OCI-LY7 (cell line): ENCODE measurements at regions of chr3 and their contacts with region 1.

Region 1: GRCh38 chr3:188993181-188993580 is 178.6 kb upstream of the TPRG1 start:
- DNase-seq: no peak
- H3K4me3 ChIP-seq: no peak overlapping the region
- H3K27ac ChIP-seq: no peak overlapping the region
- H3K4me1 ChIP-seq: no peaks in the 10 kb centered on the region
- CTCF ChIP-seq: no peak

Region 2: DNA sequence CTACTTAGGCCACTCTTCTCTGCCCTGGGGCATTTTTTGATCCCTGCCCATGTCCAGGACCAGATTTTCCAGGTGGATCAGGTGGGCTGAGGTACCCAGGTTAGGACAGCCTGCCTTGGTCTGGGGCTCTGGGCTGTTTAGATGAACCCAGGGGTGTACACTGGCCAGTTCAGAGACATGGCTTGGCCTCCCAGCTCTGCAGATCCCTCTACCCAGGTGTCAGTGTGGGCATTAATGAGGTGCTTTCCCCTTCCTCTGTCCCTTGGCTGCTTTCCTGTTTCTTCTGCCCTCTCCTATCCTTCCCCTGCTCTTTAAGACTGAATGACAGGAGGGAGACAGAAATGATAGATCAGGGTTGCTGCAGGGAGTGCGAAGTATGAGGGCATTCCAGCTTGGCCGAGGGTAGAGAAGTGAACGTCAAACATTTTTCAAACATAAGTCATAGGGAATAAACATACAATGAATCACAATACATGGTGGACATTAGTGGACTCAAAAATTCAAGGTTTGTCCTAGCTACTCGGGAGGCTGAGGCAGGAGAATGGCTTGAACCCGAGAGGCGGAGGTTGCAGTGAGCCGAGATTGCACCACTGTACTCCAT is 1765.4 kb before region 1 on chr3:
- CTCF ChIA-PET with region 1: no interaction called
- POLR2A ChIA-PET with region 1: interaction called, 11 read pairs
- intact Hi-C with region 1: no loop called
- DNase-seq: no peak
- H3K4me3 ChIP-seq: no peak overlapping the region
- H3K27ac ChIP-seq: no peak overlapping the region
- H3K4me1 ChIP-seq: no peaks in the 10 kb centered on the region
- CTCF ChIP-seq: no peak

Region 3: GRCh38 chr3:189186101-189186500 is 192.9 kb after region 1 on chr3:
- CTCF ChIA-PET with region 1: no interaction called
- POLR2A ChIA-PET with region 1: no interaction called
- intact Hi-C with region 1: no loop called
- DNase-seq: no peak
- H3K4me3 ChIP-seq: no peak overlapping the region
- H3K27ac ChIP-seq: no peak overlapping the region
- H3K4me1 ChIP-seq: no peaks in the 10 kb centered on the region
- CTCF ChIP-seq: no peak